ENCODE measurements at regions of chr3 and their contacts with region 1.

Region 1: GRCh38 chr3:72722930-72723726 is 125.1 kb downstream of the SHQ1 start:
- DNase-seq: peak; percentile 35
- ATAC-seq: peak; percentile 97
- H3K4me3 ChIP-seq: no peak overlapping the region
- H3K27ac ChIP-seq: no peak overlapping the region; the same call in 1 of the 2 replicates
- H3K4me1 ChIP-seq: peaks cover 8% of the 10 kb centered on the region; the same call in 1 of the 2 replicates
- H3K27me3 ChIP-seq: no peaks in the 10 kb centered on the region
- CTCF ChIP-seq: no peak
- EP300 ChIP-seq: peak; percentile 67 to 76
- POLR2A ChIP-seq: no peak
- RAD21 ChIP-seq: no peak

Region 2: DNA sequence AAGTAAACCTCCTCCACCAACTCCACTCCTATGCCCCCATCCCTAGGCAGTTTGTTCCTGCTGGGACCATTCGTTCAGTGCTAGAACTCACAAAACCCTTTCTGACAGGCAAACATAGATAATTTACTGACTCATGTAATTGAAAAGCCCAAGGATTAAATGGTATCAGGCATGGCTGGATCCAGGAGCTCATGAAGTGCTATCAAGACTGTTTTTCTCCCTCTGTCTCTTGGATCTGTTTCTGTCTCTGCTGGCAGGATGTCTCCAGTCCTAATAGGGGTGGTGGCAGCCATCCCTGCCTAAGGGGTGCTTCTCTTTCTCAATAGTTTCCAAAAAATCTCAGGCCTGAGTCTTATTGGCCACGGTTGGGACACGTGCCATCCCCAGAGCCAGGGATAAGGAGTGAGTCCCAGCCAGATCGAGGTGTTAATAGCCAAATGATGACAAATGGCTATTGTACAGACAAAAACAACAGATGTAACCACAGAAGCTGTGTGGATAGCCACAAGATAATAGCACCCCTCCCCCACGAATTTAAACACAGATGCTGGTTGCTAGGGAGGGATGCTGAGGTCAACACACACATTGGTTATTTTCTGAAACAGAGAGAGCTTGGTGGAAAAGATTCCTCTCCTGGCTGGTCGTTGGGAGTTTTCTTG is 43.5 kb before region 1 on chr3:
- CTCF ChIA-PET with region 1: no interaction called
- POLR2A ChIA-PET with region 1: no interaction called
- RAD21 ChIA-PET with region 1: interaction called, 6 read pairs
- SMC1A ChIA-PET with region 1: interaction called, 6 read pairs
- in situ Hi-C with region 1: no loop called
- intact Hi-C with region 1: loop called (anchors 2 kb)
- DNase-seq: no peak
- ATAC-seq: peak; percentile 32
- H3K4me3 ChIP-seq: no peak overlapping the region
- H3K27ac ChIP-seq: no peak overlapping the region
- H3K4me1 ChIP-seq: peaks cover 39% of the 10 kb centered on the region
- H3K27me3 ChIP-seq: no peaks in the 10 kb centered on the region
- CTCF ChIP-seq: no peak
- EP300 ChIP-seq: peak; percentile 20 to 49; a peak in 2 of 4 replicates
- POLR2A ChIP-seq: no peak
- RAD21 ChIP-seq: no peak

Region 3: GRCh38 chr3:72738752-72739530 is 15.8 kb after region 1 on chr3:
- CTCF ChIA-PET with region 1: no interaction called
- POLR2A ChIA-PET with region 1: no interaction called
- RAD21 ChIA-PET with region 1: no interaction called
- SMC1A ChIA-PET with region 1: no interaction called
- in situ Hi-C with region 1: no loop called
- intact Hi-C with region 1: no loop called
- DNase-seq: no peak
- ATAC-seq: peak; percentile 92
- H3K4me3 ChIP-seq: peak overlapping the region; percentile 44; the same call in 1 of the 2 replicates
- H3K27ac ChIP-seq: no peak overlapping the region
- H3K4me1 ChIP-seq: no peaks in the 10 kb centered on the region; the same call in 1 of the 2 replicates
- H3K27me3 ChIP-seq: no peaks in the 10 kb centered on the region; a peak in 2 of 4 replicates
- CTCF ChIP-seq: no peak
- EP300 ChIP-seq: no peak
- POLR2A ChIP-seq: no peak
- RAD21 ChIP-seq: no peak

Measured in GM12878 (cell line).